GM10248 (cell line): ENCODE measurements at regions of chr13 and their contacts with region 1.

Region 1: GRCh38 chr13:77042566-77043178 is 15.7 kb upstream of the FBXL3 start:
- DNase-seq: no peak
- CTCF ChIP-seq: no peak

Region 2: GRCh38 chr13:77026818-77027585 is 15.7 kb before region 1 on chr13 and contains the start of gene FBXL3:
- CTCF ChIA-PET with region 1: interaction called, 13 read pairs
- POLR2A ChIA-PET with region 1: no interaction called
- DNase-seq: peak; percentile 93
- CTCF ChIP-seq: no peak

Region 3: GRCh38 chr13:77056382-77056781 is 13.7 kb after region 1 on chr13:
- CTCF ChIA-PET with region 1: interaction called, 15 read pairs
- POLR2A ChIA-PET with region 1: no interaction called
- DNase-seq: no peak
- CTCF ChIP-seq: no peak